MCF 10A (cell line): ENCODE measurements at regions of chr5 and their contacts with region 1.

Region 1: GRCh38 chr5:164672931-164673694 is 1167.7 kb downstream of the MAT2B start:
- DNase-seq: peak; percentile 42
- H3K4me3 Mint-ChIP-seq: no peak overlapping the region
- H3K27ac Mint-ChIP-seq: no peak overlapping the region
- H3K4me1 Mint-ChIP-seq: no peaks in the 10 kb centered on the region
- H3K27me3 Mint-ChIP-seq: no peaks in the 10 kb centered on the region
- CTCF ChIP-seq: peak; percentile 54

Region 2: GRCh38 chr5:164048359-164048926 is 624.7 kb before region 1 on chr5:
- CTCF ChIA-PET with region 1: interaction called, 3 read pairs
- POLR2A ChIA-PET with region 1: no interaction called
- intact Hi-C with region 1: loop called (anchors 1 kb)
- DNase-seq: peak; percentile 45
- H3K4me3 Mint-ChIP-seq: no peak overlapping the region
- H3K27ac Mint-ChIP-seq: no peak overlapping the region
- H3K4me1 Mint-ChIP-seq: no peaks in the 10 kb centered on the region
- H3K27me3 Mint-ChIP-seq: no peaks in the 10 kb centered on the region
- CTCF ChIP-seq: peak; percentile 61

Region 3: GRCh38 chr5:164722702-164723101 is 49.6 kb after region 1 on chr5:
- CTCF ChIA-PET with region 1: no interaction called
- POLR2A ChIA-PET with region 1: no interaction called
- intact Hi-C with region 1: no loop called
- DNase-seq: no peak
- H3K4me3 Mint-ChIP-seq: no peak overlapping the region
- H3K27ac Mint-ChIP-seq: no peak overlapping the region
- H3K4me1 Mint-ChIP-seq: peaks cover 10% of the 10 kb centered on the region
- H3K27me3 Mint-ChIP-seq: no peaks in the 10 kb centered on the region
- CTCF ChIP-seq: no peak

Region 4: GRCh38 chr5:165457859-165458481 is 784.9 kb after region 1 on chr5:
- CTCF ChIA-PET with region 1: no interaction called
- POLR2A ChIA-PET with region 1: no interaction called
- intact Hi-C with region 1: loop called (anchors 5 kb)
- DNase-seq: peak; percentile 79
- H3K4me3 Mint-ChIP-seq: no peak overlapping the region
- H3K27ac Mint-ChIP-seq: no peak overlapping the region
- H3K4me1 Mint-ChIP-seq: peaks cover 11% of the 10 kb centered on the region
- H3K27me3 Mint-ChIP-seq: no peaks in the 10 kb centered on the region
- CTCF ChIP-seq: peak; percentile 80